AG04450 (cell line): ENCODE measurements at regions of chr19 and their contacts with region 1.

Region 1: DNA sequence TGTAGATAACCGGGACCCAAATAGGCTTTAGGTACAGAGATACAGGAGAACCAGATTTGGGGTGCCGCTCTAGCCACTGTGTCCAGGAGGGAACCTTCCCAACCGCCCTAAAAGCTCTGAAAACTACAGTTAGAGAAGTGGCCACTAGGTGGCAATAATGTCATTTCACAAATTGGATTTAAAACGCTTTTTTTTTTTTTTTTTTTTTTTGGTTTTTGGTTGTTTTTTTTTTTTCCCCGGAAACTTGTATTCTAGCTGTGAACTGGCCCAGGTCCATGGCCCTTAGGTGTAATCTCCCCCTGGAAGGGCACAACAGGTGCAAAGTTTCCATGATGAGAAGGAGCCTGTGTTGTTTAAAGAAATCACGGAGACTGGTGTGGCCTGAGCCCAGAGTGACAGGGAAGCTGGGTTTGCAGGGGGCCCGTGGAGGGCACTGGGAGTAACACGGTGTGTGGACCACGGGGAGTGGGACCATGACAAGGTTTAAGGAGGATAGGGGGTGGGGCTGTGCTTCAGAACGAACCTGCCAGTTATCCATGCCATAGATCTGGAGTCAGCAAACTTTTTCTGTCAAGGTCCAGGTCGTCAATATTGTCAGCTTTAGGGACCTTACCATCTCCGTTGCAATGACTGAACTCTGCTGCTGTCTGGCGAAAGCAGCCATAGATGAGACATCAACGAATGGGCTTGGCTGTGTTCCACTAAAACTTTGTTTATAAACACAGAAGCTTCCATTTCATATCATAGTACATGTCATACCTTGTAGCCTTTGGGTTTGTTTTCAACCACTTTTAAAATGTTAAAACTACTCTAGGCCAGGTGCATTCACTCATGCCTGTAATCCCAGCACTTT is 10.1 kb downstream of the OR1I1 start:
- DNase-seq: peak; percentile 39
- H3K4me3 ChIP-seq: peak overlapping the region; percentile 31
- H3K27ac ChIP-seq: no peak overlapping the region
- H3K27me3 ChIP-seq: peaks cover 4% of the 10 kb centered on the region
- CTCF ChIP-seq: peak; percentile 62

Region 2: GRCh38 chr19:14916848-14917247 is 175.3 kb before region 1 on chr19:
- CTCF ChIA-PET with region 1: no interaction called
- POLR2A ChIA-PET with region 1: no interaction called
- DNase-seq: no peak
- H3K4me3 ChIP-seq: no peak overlapping the region
- H3K27ac ChIP-seq: no peak overlapping the region
- H3K27me3 ChIP-seq: no peaks in the 10 kb centered on the region
- CTCF ChIP-seq: no peak

Region 3: DNA sequence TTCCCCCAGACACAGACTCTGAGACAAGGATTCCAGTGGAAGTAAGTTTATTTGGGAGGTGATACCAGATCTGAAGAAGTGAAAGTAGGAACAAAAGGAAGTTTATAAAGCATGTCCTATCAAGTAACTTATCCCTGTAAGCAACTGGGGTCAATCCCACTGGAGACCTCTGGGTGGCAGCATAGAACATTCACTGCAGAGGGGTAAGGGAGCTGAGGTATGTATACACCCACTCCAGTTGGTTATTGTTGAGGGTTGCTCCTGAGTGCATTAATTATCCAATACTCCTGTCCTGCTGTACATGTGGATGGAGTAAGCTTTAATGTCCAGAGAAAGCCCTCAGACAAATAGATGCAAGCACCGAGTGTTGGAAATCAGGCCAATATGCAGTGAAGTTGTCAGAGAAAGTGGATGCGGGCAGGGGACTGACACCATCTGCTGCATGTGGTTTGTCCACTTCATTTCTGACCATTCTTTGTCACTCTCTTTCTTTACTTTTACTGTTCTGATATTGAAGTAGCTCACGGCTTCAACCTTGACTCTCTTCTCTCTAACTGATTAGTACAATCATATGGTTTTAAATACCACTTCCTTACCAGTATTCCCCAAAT is 62.0 kb after region 1 on chr19:
- CTCF ChIA-PET with region 1: interaction called, 38 read pairs
- POLR2A ChIA-PET with region 1: no interaction called
- DNase-seq: no peak
- H3K4me3 ChIP-seq: no peak overlapping the region
- H3K27ac ChIP-seq: no peak overlapping the region
- H3K27me3 ChIP-seq: peaks cover 6% of the 10 kb centered on the region
- CTCF ChIP-seq: peak; percentile 60

Region 4: DNA sequence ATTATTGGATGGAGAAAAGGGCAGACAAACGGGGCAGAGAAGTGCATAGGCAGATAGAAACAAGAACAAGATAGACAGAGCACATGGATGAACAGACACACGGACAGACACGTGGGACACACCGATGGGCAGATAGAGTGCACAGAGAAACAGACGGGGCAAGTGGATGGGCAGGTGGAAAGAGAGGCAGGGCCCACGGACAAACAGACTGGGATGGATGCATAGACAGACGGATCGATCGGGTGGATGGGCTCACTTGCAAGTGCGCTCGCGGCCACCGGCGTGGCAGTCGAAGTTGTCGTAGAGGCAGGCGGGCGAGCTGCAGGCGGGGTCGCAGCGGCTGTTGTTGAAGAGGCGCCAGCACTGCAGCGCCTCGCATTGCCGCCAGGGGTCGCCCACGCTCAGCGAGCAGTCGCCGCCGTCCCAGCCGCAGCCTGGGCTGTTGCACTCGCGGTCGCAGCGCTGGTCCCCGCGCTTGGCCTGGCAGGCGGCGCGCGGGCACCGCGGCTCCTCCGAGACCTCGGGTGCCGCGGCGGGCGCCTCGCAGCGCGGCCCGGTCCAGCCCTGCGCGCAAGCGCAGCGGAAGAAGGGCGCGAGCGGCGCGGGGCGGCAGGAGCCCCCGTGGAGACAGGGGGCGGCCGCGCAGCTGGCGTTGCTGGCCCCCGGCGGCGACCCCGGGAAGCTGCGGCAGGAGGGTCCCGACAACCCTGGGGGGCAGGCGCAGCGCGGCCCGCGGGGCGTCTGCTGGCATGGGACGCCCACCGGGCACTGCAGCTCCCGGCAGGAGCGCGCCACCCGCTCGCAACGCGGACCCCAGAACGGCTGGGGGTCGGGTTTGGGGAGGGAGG is 85.4 kb after region 1 on chr19:
- CTCF ChIA-PET with region 1: interaction called, 12 read pairs
- POLR2A ChIA-PET with region 1: no interaction called
- DNase-seq: no peak
- H3K4me3 ChIP-seq: no peak overlapping the region; the same call in 1 of the 2 replicates
- H3K27ac ChIP-seq: no peak overlapping the region
- H3K27me3 ChIP-seq: no peaks in the 10 kb centered on the region
- CTCF ChIP-seq: peak; percentile 79

Region 5: DNA sequence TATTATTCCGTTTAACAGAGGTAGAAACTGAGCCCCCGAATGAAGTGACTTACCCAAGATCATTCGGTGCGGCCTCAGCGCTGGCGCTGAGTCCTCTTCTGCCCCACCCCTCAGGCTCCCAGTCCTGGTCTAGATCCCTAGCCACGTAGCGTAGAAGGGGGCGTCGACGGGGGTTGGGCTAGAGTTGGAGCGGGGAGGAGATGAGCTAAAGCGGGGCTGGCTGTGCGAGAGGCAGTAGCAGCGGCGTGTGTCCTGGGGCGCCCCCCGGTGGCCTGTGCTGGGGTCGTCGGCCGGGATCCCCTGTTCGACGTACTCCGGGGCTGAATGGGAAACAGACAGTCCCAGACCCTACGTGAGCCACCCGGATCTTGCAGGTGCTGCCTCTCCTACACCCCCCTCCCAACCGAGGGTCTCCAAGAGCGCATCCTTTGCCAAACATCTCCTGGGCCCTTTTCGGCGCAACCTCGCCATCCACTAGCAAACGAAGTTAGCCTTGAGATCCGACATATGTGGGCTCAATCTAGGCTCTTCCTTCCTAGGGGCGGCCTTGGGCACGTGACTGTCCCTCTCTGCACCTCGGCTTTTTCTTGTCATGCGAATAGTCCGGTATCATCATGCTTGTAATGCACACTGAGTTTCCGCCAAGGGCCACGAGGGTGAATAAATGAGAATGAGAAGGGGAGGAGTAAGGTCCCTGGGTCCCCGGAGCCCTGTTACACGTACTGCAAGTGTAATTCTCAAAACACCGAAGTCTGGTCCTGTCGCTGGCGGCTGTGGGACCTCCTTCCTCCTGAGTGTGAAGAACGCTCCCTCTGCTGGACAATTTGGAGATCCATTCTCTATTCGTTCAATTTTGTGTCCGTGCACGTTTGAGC is 463.9 kb after region 1 on chr19:
- CTCF ChIA-PET with region 1: interaction called, 21 read pairs
- POLR2A ChIA-PET with region 1: interaction called, 5 read pairs
- DNase-seq: peak; percentile 66
- H3K4me3 ChIP-seq: peak overlapping the region; percentile 31
- H3K27ac ChIP-seq: peak overlapping the region; percentile 31
- H3K27me3 ChIP-seq: peaks cover 5% of the 10 kb centered on the region
- CTCF ChIP-seq: peak; percentile 85